ENCODE measurements at regions of chr4 and their contacts with region 1.

Region 1: DNA sequence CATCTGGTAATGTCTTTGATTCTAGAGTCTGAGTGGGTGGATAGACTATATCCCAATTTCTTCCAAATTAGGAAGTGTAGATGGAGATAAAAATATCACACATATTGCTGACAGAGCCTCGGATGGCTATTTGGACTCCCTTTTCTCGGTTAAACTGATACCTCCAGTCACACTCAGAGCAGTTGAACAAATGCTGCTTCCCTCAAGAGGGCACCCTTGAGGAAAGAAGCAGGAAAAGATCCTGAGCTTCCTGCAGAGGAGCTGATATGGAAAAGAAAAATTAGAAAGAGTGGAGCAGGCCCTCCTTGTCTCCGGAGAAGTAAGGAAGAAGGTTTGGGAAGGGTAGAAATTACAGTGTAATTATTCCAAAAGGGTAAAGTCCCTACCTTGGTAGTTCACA is 96.2 kb upstream of the CCSER1 start:
- DNase-seq: peak in 1 of 2 experiments; percentile 44
- H3K4me3 ChIP-seq: no peak overlapping the region
- H3K4me3 Mint-ChIP-seq: no peak overlapping the region
- H3K27ac Mint-ChIP-seq: no peak overlapping the region
- H3K4me1 ChIP-seq: no peaks in the 10 kb centered on the region
- H3K4me1 Mint-ChIP-seq: no peaks in the 10 kb centered on the region
- H3K27me3 ChIP-seq: no peaks in the 10 kb centered on the region
- H3K27me3 Mint-ChIP-seq: no peaks in the 10 kb centered on the region
- CTCF ChIP-seq: peak; percentile 32 to 37

Region 2: GRCh38 chr4:89788206-89789072 is 242.5 kb before region 1 on chr4:
- CTCF ChIA-PET with region 1: no interaction called
- POLR2A ChIA-PET with region 1: no interaction called
- intact Hi-C with region 1: no loop called
- DNase-seq: no peak
- H3K4me3 ChIP-seq: no peak overlapping the region
- H3K4me3 Mint-ChIP-seq: no peak overlapping the region
- H3K27ac Mint-ChIP-seq: no peak overlapping the region
- H3K4me1 ChIP-seq: no peaks in the 10 kb centered on the region
- H3K4me1 Mint-ChIP-seq: no peaks in the 10 kb centered on the region
- H3K27me3 ChIP-seq: no peaks in the 10 kb centered on the region
- H3K27me3 Mint-ChIP-seq: peaks cover 2% of the 10 kb centered on the region
- CTCF ChIP-seq: no peak

Region 3: GRCh38 chr4:89949782-89950387 is 81.1 kb before region 1 on chr4:
- CTCF ChIA-PET with region 1: no interaction called
- POLR2A ChIA-PET with region 1: no interaction called
- intact Hi-C with region 1: loop called (anchors 1 kb)
- DNase-seq: no peak
- H3K4me3 ChIP-seq: no peak overlapping the region
- H3K4me3 Mint-ChIP-seq: no peak overlapping the region
- H3K27ac Mint-ChIP-seq: no peak overlapping the region
- H3K4me1 ChIP-seq: no peaks in the 10 kb centered on the region
- H3K4me1 Mint-ChIP-seq: no peaks in the 10 kb centered on the region
- H3K27me3 ChIP-seq: no peaks in the 10 kb centered on the region
- H3K27me3 Mint-ChIP-seq: no peaks in the 10 kb centered on the region
- CTCF ChIP-seq: peak; percentile 36 to 37

Region 4: GRCh38 chr4:90240333-90240732 is 209.4 kb after region 1 on chr4:
- CTCF ChIA-PET with region 1: no interaction called
- POLR2A ChIA-PET with region 1: no interaction called
- intact Hi-C with region 1: loop called (anchors 1 kb)
- DNase-seq: no peak
- H3K4me3 ChIP-seq: no peak overlapping the region
- H3K4me3 Mint-ChIP-seq: no peak overlapping the region
- H3K27ac Mint-ChIP-seq: no peak overlapping the region
- H3K4me1 ChIP-seq: 0 out of 2 replicates have a peak, but pooled peaks cover 2% of the 10 kb centered on the region
- H3K4me1 Mint-ChIP-seq: no peaks in the 10 kb centered on the region
- H3K27me3 ChIP-seq: no peaks in the 10 kb centered on the region
- H3K27me3 Mint-ChIP-seq: no peaks in the 10 kb centered on the region
- CTCF ChIP-seq: no peak